CD4-positive, alpha-beta memory T cell (primary cell): ENCODE measurements at regions of chrX and their contacts with region 1.

Region 1: GRCh38 chrX:72018277-72019112 is 107.8 kb downstream of the NHSL2 start:
- DNase-seq: peak; percentile 76 to 85 (median 81)
- H3K4me3 ChIP-seq: no peak overlapping the region
- H3K4me3 Mint-ChIP-seq: peak overlapping the region in 5 of 8 donors; percentile 13 to 54 (median 44)
- H3K27ac ChIP-seq: no peak overlapping the region
- H3K27ac Mint-ChIP-seq: peak overlapping the region in 5 of 7 donors; percentile 51 to 83 (median 64)
- H3K4me1 ChIP-seq: peaks cover 30% of the 10 kb centered on the region
- H3K4me1 Mint-ChIP-seq: peaks cover 16 to 38% (median 24%) of the 10 kb centered on the region in 4 donors
- H3K27me3 ChIP-seq: no peaks in the 10 kb centered on the region
- H3K27me3 Mint-ChIP-seq: no peaks in the 10 kb centered on the region

Region 2: DNA sequence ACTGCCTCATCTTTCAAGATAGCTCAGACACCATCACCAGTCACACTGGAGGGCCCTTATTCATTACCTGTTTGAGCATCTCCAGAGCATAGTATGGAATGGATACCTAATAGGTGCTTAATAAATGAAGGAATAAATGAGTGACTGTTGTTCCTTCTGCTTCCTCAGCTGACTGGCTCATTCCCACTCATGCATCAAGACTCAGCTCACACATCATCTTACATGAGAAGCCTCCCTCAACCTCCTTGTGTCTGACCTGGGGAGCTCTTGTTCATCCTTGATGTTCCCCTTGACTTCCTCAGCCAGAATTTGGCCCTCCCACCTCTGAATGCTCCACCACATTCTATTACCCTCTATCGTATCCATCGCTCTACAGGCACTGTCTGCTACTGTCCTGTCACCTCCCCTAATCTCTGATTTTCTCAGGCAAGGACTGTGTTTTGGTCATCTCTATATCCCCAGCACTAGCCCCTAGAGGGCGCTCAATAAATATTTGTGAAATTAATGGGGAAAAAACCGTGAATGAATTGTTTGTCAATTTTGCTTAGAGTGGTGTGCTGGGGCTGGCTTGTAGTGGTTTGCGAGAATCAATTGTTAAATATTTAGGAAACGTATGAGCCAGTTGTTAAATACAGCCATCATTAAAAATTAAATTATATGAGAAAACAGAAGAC is 19.5 kb before region 1 on chrX:
- CTCF ChIA-PET with region 1: interaction called, 42 read pairs
- POLR2A ChIA-PET with region 1: interaction called, 3 read pairs
- intact Hi-C with region 1: loop called (anchors 1 kb)
- DNase-seq: peak; percentile 34 to 50 (median 41)
- H3K4me3 ChIP-seq: no peak overlapping the region
- H3K4me3 Mint-ChIP-seq: no peak overlapping the region
- H3K27ac ChIP-seq: no peak overlapping the region
- H3K27ac Mint-ChIP-seq: peak overlapping the region in 1 of 7 donors; percentile 63
- H3K4me1 ChIP-seq: peaks cover 3% of the 10 kb centered on the region
- H3K4me1 Mint-ChIP-seq: peaks cover 2 to 14% (median 3%) of the 10 kb centered on the region in 4 donors
- H3K27me3 ChIP-seq: no peaks in the 10 kb centered on the region
- H3K27me3 Mint-ChIP-seq: no peaks in the 10 kb centered on the region

Region 3: DNA sequence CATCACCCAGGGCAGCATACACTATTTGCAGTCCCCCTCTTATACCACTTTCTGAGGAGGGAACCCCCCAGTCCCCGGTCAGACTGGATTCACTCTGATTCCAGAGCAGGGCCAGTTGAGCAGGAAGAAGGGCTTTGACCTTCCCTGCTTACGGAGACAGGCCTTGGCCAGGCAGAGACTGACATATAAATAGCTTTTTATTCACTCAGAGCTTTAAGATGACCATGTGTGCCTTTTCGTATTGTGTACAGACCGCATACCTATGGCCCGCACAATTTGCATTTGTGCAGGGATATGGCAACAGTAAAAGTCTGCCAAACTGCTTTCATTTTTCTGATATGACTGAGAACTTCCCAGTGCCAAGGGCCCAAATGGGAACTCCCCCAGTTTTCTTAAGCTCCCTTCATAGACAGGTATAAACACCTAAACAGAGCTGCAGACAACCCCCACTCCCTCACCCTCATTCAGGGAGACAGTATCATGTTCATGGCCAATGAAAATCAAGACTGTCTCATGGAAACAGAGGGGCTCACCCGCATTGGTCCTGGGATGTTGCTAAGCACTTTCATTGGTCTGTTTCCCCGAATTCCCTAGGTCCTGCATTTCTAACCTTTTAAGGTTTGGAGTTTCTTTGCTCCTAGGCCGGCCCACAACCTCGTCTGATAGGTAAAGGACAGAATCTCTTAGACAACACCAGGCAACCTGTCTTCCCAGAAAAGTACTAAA is 27.2 kb after region 1 on chrX:
- CTCF ChIA-PET with region 1: interaction called, 13 read pairs
- POLR2A ChIA-PET with region 1: interaction called, 4 read pairs
- intact Hi-C with region 1: no loop called
- DNase-seq: no peak
- H3K4me3 ChIP-seq: no peak overlapping the region
- H3K4me3 Mint-ChIP-seq: peak overlapping the region; percentile 28 to 86 (median 56)
- H3K27ac ChIP-seq: no peak overlapping the region
- H3K27ac Mint-ChIP-seq: peak overlapping the region in 6 of 7 donors; percentile 21 to 95 (median 72)
- H3K4me1 ChIP-seq: peaks cover 60% of the 10 kb centered on the region
- H3K4me1 Mint-ChIP-seq: peaks cover 35 to 82% (median 57%) of the 10 kb centered on the region in 4 donors
- H3K27me3 ChIP-seq: no peaks in the 10 kb centered on the region
- H3K27me3 Mint-ChIP-seq: no peaks in the 10 kb centered on the region

Region 4: GRCh38 chrX:72100824-72101351 is 82.4 kb after region 1 on chrX:
- CTCF ChIA-PET with region 1: interaction called, 38 read pairs
- POLR2A ChIA-PET with region 1: interaction called, 14 read pairs
- intact Hi-C with region 1: loop called (anchors 2 kb)
- DNase-seq: peak; percentile 85 to 89 (median 88)
- H3K4me3 ChIP-seq: peak overlapping the region; percentile 40 to 42
- H3K4me3 Mint-ChIP-seq: peak overlapping the region; percentile 91 to 97 (median 96)
- H3K27ac ChIP-seq: peak overlapping the region; percentile 71
- H3K27ac Mint-ChIP-seq: peak overlapping the region; percentile 92 to 99 (median 98)
- H3K4me1 ChIP-seq: peaks cover 75% of the 10 kb centered on the region
- H3K4me1 Mint-ChIP-seq: peaks cover 42 to 79% (median 62%) of the 10 kb centered on the region in 4 donors
- H3K27me3 ChIP-seq: no peaks in the 10 kb centered on the region
- H3K27me3 Mint-ChIP-seq: no peaks in the 10 kb centered on the region

Region 5: GRCh38 chrX:72181178-72182125 is 163.0 kb after region 1 on chrX and contains the start of gene PIN4:
- CTCF ChIA-PET with region 1: interaction called, 3 read pairs
- POLR2A ChIA-PET with region 1: interaction called, 10 read pairs
- intact Hi-C with region 1: loop called (anchors 2 kb)
- DNase-seq: peak; percentile 82 to 87 (median 84)
- H3K4me3 ChIP-seq: peak within 1 kb of the TSS; percentile 69
- H3K4me3 Mint-ChIP-seq: peak within 1 kb of the TSS in 1 of 8 donors; percentile 17
- H3K27ac ChIP-seq: peak within 1 kb of the TSS; percentile 68
- H3K27ac Mint-ChIP-seq: no peak within 1 kb of the TSS
- H3K4me1 ChIP-seq: peaks cover 24% of the 10 kb centered on the region
- H3K4me1 Mint-ChIP-seq: peaks cover 6 to 13% (median 8%) of the 10 kb centered on the region in 4 donors
- H3K27me3 ChIP-seq: no peaks in the 10 kb centered on the region
- H3K27me3 Mint-ChIP-seq: no peaks in the 10 kb centered on the region
- total RNA-seq, gene PIN4: 13.3 to 13.5 TPM

Region 6: GRCh38 chrX:72216973-72217372 is 198.5 kb after region 1 on chrX:
- CTCF ChIA-PET with region 1: no interaction called
- POLR2A ChIA-PET with region 1: no interaction called
- intact Hi-C with region 1: no loop called
- DNase-seq: no peak
- H3K4me3 ChIP-seq: no peak overlapping the region
- H3K4me3 Mint-ChIP-seq: no peak overlapping the region
- H3K27ac ChIP-seq: no peak overlapping the region
- H3K27ac Mint-ChIP-seq: no peak overlapping the region
- H3K4me1 ChIP-seq: no peaks in the 10 kb centered on the region
- H3K4me1 Mint-ChIP-seq: no peaks in the 10 kb centered on the region
- H3K27me3 ChIP-seq: no peaks in the 10 kb centered on the region
- H3K27me3 Mint-ChIP-seq: no peaks in the 10 kb centered on the region